ENCODE measurements at regions of chr17 and their contacts with region 1.

Region 1: DNA sequence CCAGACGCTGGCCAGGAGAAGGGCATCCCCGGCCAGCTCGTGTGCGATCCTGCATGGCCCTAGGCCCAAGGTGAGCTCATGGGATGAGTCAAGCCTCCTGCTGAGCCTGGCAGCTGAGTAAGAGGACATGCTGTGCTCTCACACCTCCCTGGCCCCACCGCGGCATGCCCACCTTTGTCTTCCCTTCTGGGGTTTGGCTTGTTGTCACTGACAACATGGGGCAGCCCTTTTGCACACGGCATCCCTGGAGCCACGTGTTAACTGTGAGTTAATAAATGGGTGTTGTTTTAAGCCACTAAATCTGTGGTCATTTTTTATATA is 8.9 kb upstream of the TNS4 start:
- DNase-seq: no peak
- ATAC-seq: no peak
- H3K4me3 ChIP-seq: no peak overlapping the region
- H3K4me3 Mint-ChIP-seq: no peak overlapping the region
- H3K27ac ChIP-seq: no peak overlapping the region
- H3K27ac Mint-ChIP-seq: no peak overlapping the region
- H3K4me1 ChIP-seq: peaks cover 10 to 17% of the 10 kb centered on the region in 2 experiments
- H3K4me1 Mint-ChIP-seq: peaks cover 19 to 32% (median 25%) of the 10 kb centered on the region in 3 donors
- H3K27me3 ChIP-seq: no peaks in the 10 kb centered on the region
- H3K27me3 Mint-ChIP-seq: peaks cover 0 to 4% of the 10 kb centered on the region in 2 donors

Region 2: DNA sequence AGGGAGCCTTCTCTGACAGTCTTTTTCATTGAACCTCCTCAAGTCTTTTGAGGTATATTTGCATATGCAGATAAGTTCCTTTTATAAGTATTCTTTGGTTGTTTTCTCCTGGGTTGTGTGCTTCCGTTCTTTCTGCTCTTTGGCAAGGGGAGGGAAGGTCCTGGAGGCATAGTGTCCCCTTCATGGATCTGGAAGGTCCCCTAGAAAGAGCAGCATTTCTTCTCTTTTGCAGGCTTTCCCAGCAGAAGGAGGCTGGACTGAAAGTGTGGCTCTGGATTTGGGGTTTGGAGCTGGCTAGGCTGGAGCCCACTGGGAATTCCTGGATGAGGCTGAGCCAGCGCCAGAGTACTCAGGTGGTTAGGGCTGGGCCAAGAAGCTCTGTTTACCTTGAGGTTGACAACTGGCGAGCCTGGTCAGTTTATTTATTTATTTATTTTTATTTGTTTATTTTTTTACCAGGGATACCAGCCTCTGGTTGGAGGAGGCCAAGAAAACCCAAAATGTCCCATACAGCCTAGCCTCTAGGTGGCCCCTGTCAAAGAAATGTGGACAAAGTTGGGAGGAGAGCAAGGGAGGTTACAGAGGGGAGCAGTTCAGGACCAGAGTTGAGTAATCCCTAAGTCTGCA is 87.2 kb before region 1 on chr17:
- CTCF ChIA-PET with region 1: no interaction called
- POLR2A ChIA-PET with region 1: interaction called in 1 of 2 experiments, 13 read pairs
- DNase-seq: no peak
- ATAC-seq: no peak
- H3K4me3 ChIP-seq: no peak overlapping the region
- H3K4me3 Mint-ChIP-seq: no peak overlapping the region
- H3K27ac ChIP-seq: no peak overlapping the region
- H3K27ac Mint-ChIP-seq: no peak overlapping the region
- H3K4me1 ChIP-seq: peaks cover 27 to 53% of the 10 kb centered on the region in 2 experiments
- H3K4me1 Mint-ChIP-seq: peaks cover 37 to 43% (median 39%) of the 10 kb centered on the region in 3 donors
- H3K27me3 ChIP-seq: no peaks in the 10 kb centered on the region
- H3K27me3 Mint-ChIP-seq: no peaks in the 10 kb centered on the region

Region 3: GRCh38 chr17:40472535-40473452 is 37.5 kb before region 1 on chr17:
- CTCF ChIA-PET with region 1: no interaction called
- POLR2A ChIA-PET with region 1: no interaction called
- DNase-seq: no peak
- ATAC-seq: no peak
- H3K4me3 ChIP-seq: no peak overlapping the region
- H3K4me3 Mint-ChIP-seq: no peak overlapping the region
- H3K27ac ChIP-seq: no peak overlapping the region
- H3K27ac Mint-ChIP-seq: no peak overlapping the region
- H3K4me1 ChIP-seq: peaks cover 0 to 23% of the 10 kb centered on the region in 2 experiments
- H3K4me1 Mint-ChIP-seq: peaks cover 0 to 10% (median 1%) of the 10 kb centered on the region in 3 donors
- H3K27me3 ChIP-seq: peaks cover 0 to 6% of the 10 kb centered on the region in 2 experiments
- H3K27me3 Mint-ChIP-seq: no peaks in the 10 kb centered on the region

Region 4: DNA sequence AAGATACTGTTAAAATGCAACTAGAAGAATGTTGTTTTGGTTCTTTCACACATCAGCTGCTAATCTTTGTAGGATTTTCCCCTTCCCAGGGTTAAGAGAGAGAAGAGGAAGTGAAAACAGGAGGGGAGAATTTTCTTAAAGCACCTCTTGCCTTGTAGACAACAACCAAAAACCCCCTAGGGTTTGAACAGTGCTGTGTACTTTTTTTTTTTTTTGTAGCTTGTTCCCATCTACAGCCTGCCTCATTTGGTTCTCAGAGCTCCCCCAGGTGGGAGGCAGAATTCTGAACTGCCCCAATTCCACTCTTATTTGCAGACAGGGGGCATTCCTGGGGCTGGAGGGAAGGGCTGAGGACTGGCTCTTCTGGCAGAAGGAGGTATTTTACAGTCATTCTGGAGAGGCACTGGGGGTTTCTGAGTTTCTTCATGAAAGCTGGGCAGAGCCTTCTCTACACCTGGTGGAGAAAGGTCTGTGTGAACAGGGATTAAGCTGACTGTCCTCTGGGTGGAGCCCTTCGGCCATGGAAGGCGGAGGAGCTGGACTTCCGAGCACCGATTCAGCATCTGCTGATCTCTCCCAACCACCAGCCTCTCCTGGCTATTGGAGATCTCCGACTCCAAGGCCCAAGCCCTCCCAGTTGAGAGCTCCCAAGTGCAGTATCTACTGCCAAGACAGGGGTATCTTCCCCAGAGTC is 105.2 kb after region 1 on chr17:
- CTCF ChIA-PET with region 1: no interaction called
- POLR2A ChIA-PET with region 1: no interaction called
- DNase-seq: peak in 25 of 35 experiments; percentile 32 to 82 (median 58)
- ATAC-seq: peak; percentile 44 to 69 (median 46)
- H3K4me3 ChIP-seq: no peak overlapping the region
- H3K4me3 Mint-ChIP-seq: peak overlapping the region; percentile 61 to 94 (median 64)
- H3K27ac ChIP-seq: peak overlapping the region; percentile 99
- H3K27ac Mint-ChIP-seq: peak overlapping the region; percentile 87 to 100
- H3K4me1 ChIP-seq: peaks cover 40 to 76% of the 10 kb centered on the region in 2 experiments
- H3K4me1 Mint-ChIP-seq: peaks cover 71 to 86% (median 72%) of the 10 kb centered on the region in 3 donors
- H3K27me3 ChIP-seq: no peaks in the 10 kb centered on the region
- H3K27me3 Mint-ChIP-seq: no peaks in the 10 kb centered on the region

Measured in T-cell (primary cell).